ENCODE measurements at regions of chr15 and their contacts with region 1.

Region 1: GRCh38 chr15:26095710-26096330 is 232.7 kb upstream of the ATP10A start:
- DNase-seq: no peak
- ATAC-seq: no peak
- H3K4me3 ChIP-seq: no peak overlapping the region
- H3K27ac ChIP-seq: no peak overlapping the region
- H3K4me1 ChIP-seq: peaks cover 4% of the 10 kb centered on the region
- H3K27me3 ChIP-seq: no peaks in the 10 kb centered on the region

Region 2: DNA sequence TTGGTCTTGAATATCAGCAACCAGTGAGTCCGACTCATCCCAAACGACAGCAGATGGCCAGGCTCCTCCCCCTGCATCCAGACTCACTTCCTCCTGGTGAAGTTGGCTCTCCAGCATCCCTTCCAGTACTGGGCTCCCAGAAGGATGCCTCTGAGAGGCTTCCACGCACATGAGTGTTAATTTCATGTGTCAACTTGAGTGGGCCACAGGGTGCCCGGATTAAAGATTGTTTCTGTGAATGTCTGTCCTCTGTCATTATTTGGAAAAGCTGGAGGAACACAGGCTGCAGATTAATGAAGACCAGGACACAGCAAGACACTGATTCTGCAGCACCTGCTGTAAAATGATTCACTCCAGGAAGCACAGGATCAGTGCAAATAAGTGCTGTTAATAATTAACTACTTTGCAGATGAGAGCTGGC is 332.5 kb before region 1 on chr15:
- intact Hi-C with region 1: no loop called
- DNase-seq: no peak
- ATAC-seq: no peak
- H3K4me3 ChIP-seq: no peak overlapping the region
- H3K27ac ChIP-seq: no peak overlapping the region
- H3K4me1 ChIP-seq: no peaks in the 10 kb centered on the region
- H3K27me3 ChIP-seq: no peaks in the 10 kb centered on the region

Region 3: DNA sequence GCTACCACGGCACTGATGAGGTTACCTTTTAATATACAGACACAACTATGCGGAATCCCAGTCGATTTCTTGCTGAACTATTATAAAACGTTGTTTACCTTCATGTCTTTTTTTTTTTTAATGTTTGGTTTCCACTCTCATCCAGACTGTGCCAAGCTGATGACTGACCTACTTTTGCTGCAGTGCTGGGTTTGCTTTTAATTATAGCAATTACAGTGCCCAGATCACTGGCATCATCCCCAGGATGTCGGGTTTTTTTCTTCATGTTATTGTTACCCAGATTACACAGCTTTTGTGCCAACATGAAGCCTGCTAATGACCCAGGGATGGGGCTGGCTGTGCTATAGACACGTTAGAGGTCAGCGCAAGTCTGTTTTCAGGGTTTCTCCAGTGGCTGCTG is 61.3 kb after region 1 on chr15:
- intact Hi-C with region 1: loop called in 1 of 4 experiments (anchors 10 kb)
- DNase-seq: no peak
- ATAC-seq: peak in 1 of 2 donors; percentile 16
- H3K4me3 ChIP-seq: no peak overlapping the region
- H3K27ac ChIP-seq: no peak overlapping the region
- H3K4me1 ChIP-seq: no peaks in the 10 kb centered on the region
- H3K27me3 ChIP-seq: no peaks in the 10 kb centered on the region

Measured in right cardiac atrium (tissue), 5 donors.